CD8-positive, alpha-beta memory T cell (primary cell): ENCODE measurements at regions of chr9 and their contacts with region 1.

Region 1: DNA sequence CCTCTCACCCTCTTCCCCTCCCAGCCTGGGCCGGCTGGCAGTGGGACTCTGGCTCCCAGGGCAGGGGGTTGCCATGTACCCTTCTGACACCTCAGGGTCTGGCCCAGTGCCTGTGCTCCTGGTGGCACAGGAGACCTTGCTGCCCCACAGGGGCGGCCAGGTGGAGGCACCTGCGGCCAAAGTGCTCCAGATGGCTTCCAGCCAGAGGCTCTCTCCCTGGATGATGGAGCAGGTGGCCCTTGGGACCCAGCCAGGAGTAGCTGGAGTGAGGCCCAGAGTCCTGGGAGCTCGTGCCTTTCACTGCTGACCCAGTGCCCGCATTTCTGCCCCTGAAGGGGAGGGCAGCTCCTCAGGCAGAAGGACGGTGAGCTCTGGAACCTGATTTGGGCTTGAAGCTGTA is 87.3 kb downstream of the NTNG2 start:
- DNase-seq: no peak
- H3K4me3 ChIP-seq: no peak overlapping the region
- H3K4me3 Mint-ChIP-seq: no peak overlapping the region
- H3K27ac ChIP-seq: no peak overlapping the region
- H3K27ac Mint-ChIP-seq: peak overlapping the region in 1 of 8 donors; percentile 65
- H3K4me1 ChIP-seq: no peaks in the 10 kb centered on the region
- H3K4me1 Mint-ChIP-seq: peaks cover 0 to 6% (median 0%) of the 10 kb centered on the region in 3 donors
- H3K27me3 ChIP-seq: no peaks in the 10 kb centered on the region
- H3K27me3 Mint-ChIP-seq: peaks cover 3 to 12% of the 10 kb centered on the region in 2 donors

Region 2: GRCh38 chr9:131762356-131762932 is 486.7 kb before region 1 on chr9:
- CTCF ChIA-PET with region 1: interaction called, 12 read pairs
- POLR2A ChIA-PET with region 1: no interaction called
- DNase-seq: peak; percentile 64 to 78 (median 73)
- H3K4me3 ChIP-seq: no peak overlapping the region
- H3K4me3 Mint-ChIP-seq: no peak overlapping the region
- H3K27ac ChIP-seq: no peak overlapping the region
- H3K27ac Mint-ChIP-seq: no peak overlapping the region
- H3K4me1 ChIP-seq: no peaks in the 10 kb centered on the region
- H3K4me1 Mint-ChIP-seq: no peaks in the 10 kb centered on the region
- H3K27me3 ChIP-seq: peaks cover 6% of the 10 kb centered on the region
- H3K27me3 Mint-ChIP-seq: peaks cover 3 to 24% of the 10 kb centered on the region in 2 donors